Activated CD4-positive, alpha-beta memory T cell treated with anti-CD3 and anti-CD28 coated beads, Interleukin-2, amount 10 ng/mL, durations not matched to agents 7 days and 5 days (primary cell): ENCODE measurements at regions of chr12 and their contacts with region 1.

Region 1: DNA sequence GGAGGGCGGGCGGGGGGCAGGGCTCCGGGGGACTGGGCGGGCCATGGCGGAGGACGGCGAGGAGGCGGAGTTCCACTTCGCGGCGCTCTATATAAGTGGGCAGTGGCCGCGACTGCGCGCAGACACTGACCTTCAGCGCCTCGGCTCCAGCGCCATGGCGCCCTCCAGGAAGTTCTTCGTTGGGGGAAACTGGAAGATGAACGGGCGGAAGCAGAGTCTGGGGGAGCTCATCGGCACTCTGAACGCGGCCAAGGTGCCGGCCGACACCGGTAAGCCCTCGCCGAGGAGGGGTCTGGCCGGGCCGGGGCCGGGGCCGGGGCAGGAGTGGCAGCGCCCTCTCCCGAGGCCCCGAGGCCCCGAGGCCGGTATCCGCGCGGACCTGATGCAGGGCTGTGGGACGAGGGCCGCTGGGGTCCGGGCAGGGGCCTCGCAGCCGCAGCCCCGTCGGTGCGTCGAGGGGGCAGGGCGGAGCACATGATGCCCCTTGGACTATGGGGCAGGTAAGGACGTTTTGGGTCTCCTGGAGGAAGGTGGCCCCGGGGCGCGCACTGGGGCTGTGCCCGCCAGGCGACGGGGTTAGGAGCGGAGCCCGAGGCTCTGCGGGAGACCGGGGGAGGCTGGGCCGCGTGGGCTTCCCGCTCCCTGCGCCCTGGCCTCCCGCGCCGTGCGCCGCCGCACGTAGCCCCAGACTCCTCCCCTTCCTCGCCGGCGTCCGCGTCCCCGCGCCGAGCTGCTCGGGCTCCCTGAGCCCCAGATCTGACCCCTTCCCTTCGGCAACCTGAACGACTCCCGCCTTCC is at the start of gene TPI1:
- DNase-seq: peak; percentile 83
- H3K4me3 Mint-ChIP-seq: peak within 1 kb of the TSS; percentile 97
- H3K27ac Mint-ChIP-seq: peak within 1 kb of the TSS; percentile 95
- H3K4me1 Mint-ChIP-seq: peaks cover 54% of the 10 kb centered on the region
- H3K27me3 Mint-ChIP-seq: no peaks in the 10 kb centered on the region
- total RNA-seq, gene TPI1: 1,228 to 1,253 TPM

Region 2: DNA sequence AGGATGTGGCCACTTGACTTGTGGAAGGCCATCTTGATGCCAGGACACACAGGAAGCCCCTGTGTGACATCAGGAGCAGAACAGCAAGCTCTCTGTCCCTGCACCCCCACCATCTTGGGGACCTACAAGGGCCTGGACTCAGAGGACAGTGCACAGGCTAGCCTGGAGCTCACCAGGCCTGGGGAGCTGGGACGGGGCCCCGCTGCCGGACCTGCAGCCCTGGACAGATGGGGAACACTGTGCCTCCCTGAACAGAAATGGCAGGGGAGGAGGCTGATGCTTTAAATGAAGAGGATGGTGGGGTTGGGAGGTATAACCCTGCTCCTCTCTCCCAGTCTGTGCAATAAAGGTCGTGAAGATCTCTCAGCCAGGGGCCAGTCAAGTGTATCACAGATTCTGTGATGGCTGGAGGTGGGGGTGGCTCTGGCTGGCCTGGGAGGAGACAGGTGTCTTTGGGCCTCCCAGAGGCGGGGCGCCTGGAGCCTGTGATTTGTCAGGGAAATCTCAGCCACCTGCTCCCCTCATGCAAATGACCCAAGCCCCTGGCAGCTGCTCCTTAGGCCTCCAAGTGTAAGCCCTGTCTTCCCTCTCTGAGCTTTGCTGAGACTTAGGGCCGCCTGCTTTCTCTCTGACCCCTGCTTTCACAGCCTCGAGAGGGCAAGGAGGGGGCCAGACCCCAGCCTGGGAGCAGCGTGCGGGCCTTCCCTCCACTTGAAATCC is 28.0 kb before region 1 on chr12:
- CTCF ChIA-PET with region 1: interaction called, 7 read pairs
- POLR2A ChIA-PET with region 1: interaction called, 10 read pairs
- DNase-seq: no peak
- H3K4me3 Mint-ChIP-seq: no peak overlapping the region
- H3K27ac Mint-ChIP-seq: no peak overlapping the region
- H3K4me1 Mint-ChIP-seq: peaks cover 7% of the 10 kb centered on the region
- H3K27me3 Mint-ChIP-seq: no peaks in the 10 kb centered on the region

Region 3: DNA sequence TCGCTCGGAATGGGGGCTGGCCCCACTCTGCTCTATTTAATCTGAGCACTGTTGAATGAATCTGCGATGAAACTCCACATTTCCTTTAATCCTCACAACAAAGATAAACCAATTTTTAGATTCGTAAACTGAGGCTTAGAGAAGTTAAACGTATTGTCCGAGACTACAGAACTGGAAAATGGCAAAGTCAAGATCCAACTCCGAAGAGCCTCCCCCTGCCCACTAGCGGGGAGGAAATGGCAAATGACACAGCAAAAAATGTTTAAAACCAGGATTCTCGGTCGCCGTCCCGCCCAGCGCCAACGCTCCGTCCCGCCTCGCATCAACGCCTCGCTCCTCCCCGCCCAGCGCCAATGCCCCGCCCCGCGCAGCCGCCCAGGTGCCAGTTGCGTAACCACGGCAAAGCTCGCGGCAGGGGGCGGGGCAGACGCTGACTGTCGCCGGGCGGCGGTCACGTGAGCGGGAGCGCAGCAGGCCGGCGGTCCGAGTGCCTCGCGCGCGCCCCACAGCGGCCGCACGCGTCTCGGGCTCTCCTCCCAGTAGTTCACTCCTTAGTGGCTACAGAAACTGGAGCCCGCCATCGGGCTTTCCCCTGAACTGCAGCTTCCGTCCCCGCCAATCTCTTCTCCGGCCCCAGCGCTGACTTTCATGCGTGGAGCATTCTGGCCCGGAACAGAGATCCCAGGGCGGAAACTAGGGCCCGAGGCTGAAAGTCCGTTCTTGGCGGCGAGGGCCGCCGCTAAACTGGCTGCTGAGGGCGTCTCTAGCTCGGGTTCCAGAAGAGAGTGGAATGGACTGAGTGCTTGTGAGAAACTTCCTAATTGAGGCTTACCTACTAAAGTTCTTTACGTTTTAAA is 23.4 kb after region 1 on chr12:
- CTCF ChIA-PET with region 1: interaction called, 120 read pairs
- POLR2A ChIA-PET with region 1: interaction called, 69 read pairs
- DNase-seq: peak; percentile 99
- H3K4me3 Mint-ChIP-seq: peak overlapping the region; percentile 79
- H3K27ac Mint-ChIP-seq: peak overlapping the region; percentile 93
- H3K4me1 Mint-ChIP-seq: peaks cover 38% of the 10 kb centered on the region
- H3K27me3 Mint-ChIP-seq: no peaks in the 10 kb centered on the region

Region 4: DNA sequence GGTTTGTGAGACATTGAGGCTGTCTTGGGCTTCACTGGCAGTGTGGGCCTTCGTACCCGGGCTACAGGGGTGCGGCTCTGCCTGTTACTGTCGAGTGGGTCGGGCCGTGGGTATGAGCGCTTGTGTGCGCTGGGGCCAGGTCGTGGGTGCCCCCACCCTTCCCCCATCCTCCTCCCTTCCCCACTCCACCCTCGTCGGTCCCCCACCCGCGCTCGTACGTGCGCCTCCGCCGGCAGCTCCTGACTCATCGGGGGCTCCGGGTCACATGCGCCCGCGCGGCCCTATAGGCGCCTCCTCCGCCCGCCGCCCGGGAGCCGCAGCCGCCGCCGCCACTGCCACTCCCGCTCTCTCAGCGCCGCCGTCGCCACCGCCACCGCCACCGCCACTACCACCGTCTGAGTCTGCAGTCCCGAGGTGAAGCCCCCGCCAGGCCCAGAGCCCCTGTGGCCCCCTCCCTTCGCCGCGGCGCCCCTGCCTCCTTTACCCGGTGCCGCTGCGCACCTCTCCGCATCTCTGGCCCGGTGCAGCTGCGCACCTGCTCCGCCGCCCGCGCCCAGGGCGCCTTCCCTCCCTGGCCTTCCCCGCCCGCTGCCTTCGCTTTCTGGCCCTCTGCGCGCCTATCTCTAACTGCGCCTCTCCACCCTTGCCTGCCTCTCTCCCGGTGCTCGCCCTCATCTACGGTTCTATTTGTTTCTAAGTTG is 46.8 kb after region 1 on chr12 and contains the start of gene ENO2:
- CTCF ChIA-PET with region 1: interaction called, 11 read pairs
- POLR2A ChIA-PET with region 1: interaction called, 10 read pairs
- DNase-seq: peak; percentile 86
- H3K4me3 Mint-ChIP-seq: peak within 1 kb of the TSS; percentile 90
- H3K27ac Mint-ChIP-seq: peak within 1 kb of the TSS; percentile 80
- H3K4me1 Mint-ChIP-seq: peaks cover 50% of the 10 kb centered on the region
- H3K27me3 Mint-ChIP-seq: no peaks in the 10 kb centered on the region
- total RNA-seq, gene ENO2: 206 to 207 TPM

Region 5: DNA sequence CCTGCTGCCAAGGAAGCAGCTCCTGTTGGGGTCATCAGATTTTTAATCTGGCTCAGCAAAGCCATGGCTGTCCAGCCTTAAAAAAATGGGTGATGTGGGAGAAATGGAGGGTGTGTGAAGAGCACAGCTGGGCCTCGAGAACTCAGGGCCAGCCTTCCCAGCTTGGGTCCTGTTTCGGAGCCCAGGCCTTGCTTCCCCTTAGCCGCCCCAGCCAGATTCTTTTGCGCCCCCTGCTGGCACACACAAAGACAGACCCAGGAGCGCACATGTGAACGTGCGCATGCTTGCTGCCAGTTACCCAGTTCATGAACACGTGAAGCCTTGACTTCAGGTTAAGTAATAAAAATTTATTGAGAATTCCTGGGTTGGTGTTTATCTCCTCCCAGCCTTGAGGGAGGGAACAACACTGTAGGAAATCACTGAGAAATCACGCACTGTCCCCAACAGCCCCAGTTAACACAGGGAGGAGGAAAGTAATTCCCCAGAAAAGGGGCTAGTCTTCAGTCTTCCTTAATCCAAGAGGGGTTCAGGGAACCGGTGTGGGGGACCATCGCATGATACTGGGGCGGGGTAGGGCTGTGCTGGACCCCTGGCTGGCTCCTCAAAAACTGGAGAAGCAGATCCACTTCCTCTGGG is 97.5 kb after region 1 on chr12:
- CTCF ChIA-PET with region 1: interaction called, 12 read pairs
- POLR2A ChIA-PET with region 1: interaction called, 43 read pairs
- DNase-seq: peak; percentile 89
- H3K4me3 Mint-ChIP-seq: no peak overlapping the region
- H3K27ac Mint-ChIP-seq: peak overlapping the region; percentile 83
- H3K4me1 Mint-ChIP-seq: peaks cover 79% of the 10 kb centered on the region
- H3K27me3 Mint-ChIP-seq: no peaks in the 10 kb centered on the region